Activated CD4-positive, alpha-beta memory T cell treated with anti-CD3 and anti-CD28 coated beads for 36 hours (primary cell): ENCODE measurements at regions of chr12 and their contacts with region 1.

Region 1: GRCh38 chr12:1117970-1118563 is 127.0 kb downstream of the ERC1 start:
- DNase-seq: peak; percentile 78
- H3K4me3 Mint-ChIP-seq: no peak overlapping the region
- H3K27ac Mint-ChIP-seq: no peak overlapping the region
- H3K4me1 Mint-ChIP-seq: peaks cover 17% of the 10 kb centered on the region
- H3K27me3 Mint-ChIP-seq: no peaks in the 10 kb centered on the region

Region 2: DNA sequence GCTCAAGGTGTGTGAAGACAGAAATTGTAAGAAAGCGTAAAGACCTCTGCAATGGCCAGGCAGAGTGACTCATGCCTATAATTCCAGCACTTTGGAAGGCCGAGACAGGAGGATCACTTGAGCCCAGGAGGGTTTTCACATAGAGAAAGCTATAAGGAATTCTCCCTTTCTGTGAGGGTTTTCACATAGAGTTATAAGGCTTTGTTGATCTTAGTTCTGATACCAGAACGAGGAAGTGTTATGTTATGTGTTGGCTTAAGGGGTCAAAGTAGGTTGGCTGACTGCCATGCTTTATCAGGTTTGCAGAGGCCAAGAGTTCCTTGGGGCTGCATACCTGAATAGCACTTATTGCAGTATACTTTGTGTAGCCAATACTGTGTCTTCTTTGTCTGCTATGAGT is 12.1 kb after region 1 on chr12:
- CTCF ChIA-PET with region 1: interaction called, 16 read pairs
- POLR2A ChIA-PET with region 1: no interaction called
- intact Hi-C with region 1: no loop called
- DNase-seq: no peak
- H3K4me3 Mint-ChIP-seq: no peak overlapping the region
- H3K27ac Mint-ChIP-seq: no peak overlapping the region
- H3K4me1 Mint-ChIP-seq: peaks cover 26% of the 10 kb centered on the region
- H3K27me3 Mint-ChIP-seq: no peaks in the 10 kb centered on the region

Region 3: GRCh38 chr12:1250641-1251040 is 132.6 kb after region 1 on chr12:
- CTCF ChIA-PET with region 1: interaction called, 10 read pairs
- POLR2A ChIA-PET with region 1: no interaction called
- intact Hi-C with region 1: no loop called
- DNase-seq: no peak
- H3K4me3 Mint-ChIP-seq: no peak overlapping the region
- H3K27ac Mint-ChIP-seq: no peak overlapping the region
- H3K4me1 Mint-ChIP-seq: no peaks in the 10 kb centered on the region
- H3K27me3 Mint-ChIP-seq: no peaks in the 10 kb centered on the region

Region 4: GRCh38 chr12:1533602-1534304 is 415.7 kb after region 1 on chr12:
- CTCF ChIA-PET with region 1: interaction called, 10 read pairs
- POLR2A ChIA-PET with region 1: no interaction called
- intact Hi-C with region 1: no loop called
- DNase-seq: peak; percentile 85
- H3K4me3 Mint-ChIP-seq: peak overlapping the region; percentile 45
- H3K27ac Mint-ChIP-seq: no peak overlapping the region
- H3K4me1 Mint-ChIP-seq: peaks cover 29% of the 10 kb centered on the region
- H3K27me3 Mint-ChIP-seq: peaks cover 62% of the 10 kb centered on the region

Region 5: GRCh38 chr12:1594261-1595025 is 476.4 kb after region 1 on chr12 and contains the start of gene FBXL14:
- CTCF ChIA-PET with region 1: interaction called, 80 read pairs
- POLR2A ChIA-PET with region 1: interaction called, 3 read pairs
- intact Hi-C with region 1: no loop called
- DNase-seq: peak; percentile 91
- H3K4me3 Mint-ChIP-seq: peak within 1 kb of the TSS; percentile 94
- H3K27ac Mint-ChIP-seq: peak within 1 kb of the TSS; percentile 91
- H3K4me1 Mint-ChIP-seq: peaks cover 31% of the 10 kb centered on the region
- H3K27me3 Mint-ChIP-seq: no peaks in the 10 kb centered on the region
- total RNA-seq, gene FBXL14: 13.5 to 14.4 TPM